ENCODE measurements at regions of chr20 and their contacts with region 1.

Region 1: GRCh38 chr20:35207950-35208611 is 18.4 kb upstream of the MMP24 start:
- DNase-seq: peak; percentile 88
- ATAC-seq: peak; percentile 94
- H3K4me3 Mint-ChIP-seq: no peak overlapping the region
- H3K27ac Mint-ChIP-seq: no peak overlapping the region
- H3K4me1 Mint-ChIP-seq: no peaks in the 10 kb centered on the region
- H3K27me3 Mint-ChIP-seq: no peaks in the 10 kb centered on the region

Region 2: GRCh38 chr20:35135867-35136586 is 72.1 kb before region 1 on chr20:
- CTCF ChIA-PET with region 1: no interaction called
- POLR2A ChIA-PET with region 1: no interaction called
- DNase-seq: no peak
- ATAC-seq: no peak
- H3K4me3 Mint-ChIP-seq: no peak overlapping the region
- H3K27ac Mint-ChIP-seq: no peak overlapping the region
- H3K4me1 Mint-ChIP-seq: no peaks in the 10 kb centered on the region
- H3K27me3 Mint-ChIP-seq: no peaks in the 10 kb centered on the region

Region 3: GRCh38 chr20:35166242-35166830 is 41.7 kb before region 1 on chr20:
- CTCF ChIA-PET with region 1: no interaction called
- POLR2A ChIA-PET with region 1: no interaction called
- DNase-seq: no peak
- ATAC-seq: no peak
- H3K4me3 Mint-ChIP-seq: no peak overlapping the region
- H3K27ac Mint-ChIP-seq: no peak overlapping the region
- H3K4me1 Mint-ChIP-seq: peaks cover 15% of the 10 kb centered on the region
- H3K27me3 Mint-ChIP-seq: peaks cover 6% of the 10 kb centered on the region

Region 4: DNA sequence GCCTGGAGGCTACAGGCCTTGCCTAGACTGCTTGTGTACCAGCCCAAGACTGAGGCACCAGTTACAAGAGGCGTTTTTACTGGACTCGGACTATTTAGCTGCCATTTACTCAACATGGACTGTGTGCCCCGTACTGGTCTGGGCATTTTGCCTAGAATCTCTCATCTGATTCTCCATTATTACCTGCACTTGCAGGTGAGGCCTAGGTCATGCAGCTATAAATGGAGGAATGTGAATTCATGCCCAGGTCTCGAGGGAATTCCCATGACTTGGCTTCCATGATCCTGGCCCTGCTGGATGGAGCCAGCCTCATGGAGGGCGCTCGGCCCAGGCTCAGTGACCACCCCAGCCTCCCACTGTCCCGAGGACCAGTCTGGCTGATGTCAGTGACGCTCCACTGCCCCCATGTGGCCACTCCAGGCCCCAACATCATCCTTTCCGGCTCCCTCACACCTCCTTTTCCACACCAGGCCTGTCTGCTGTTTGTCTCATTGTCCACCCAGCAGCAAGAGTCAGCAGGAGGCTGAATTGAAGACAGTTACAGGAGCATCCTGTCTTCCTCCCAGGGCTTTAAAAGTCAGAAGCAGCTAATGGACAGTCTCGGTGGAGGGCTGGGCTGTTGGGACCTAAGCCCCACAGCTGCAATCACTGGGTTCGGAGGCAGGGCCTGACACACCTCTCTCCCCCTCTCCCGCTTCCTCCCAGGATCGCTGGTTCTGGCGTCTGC is 61.1 kb after region 1 on chr20:
- CTCF ChIA-PET with region 1: interaction called, 10 read pairs
- POLR2A ChIA-PET with region 1: no interaction called
- DNase-seq: peak; percentile 67
- ATAC-seq: peak; percentile 72
- H3K4me3 Mint-ChIP-seq: no peak overlapping the region
- H3K27ac Mint-ChIP-seq: no peak overlapping the region
- H3K4me1 Mint-ChIP-seq: peaks cover 10% of the 10 kb centered on the region
- H3K27me3 Mint-ChIP-seq: no peaks in the 10 kb centered on the region